ENCODE measurements at regions of chr14 and their contacts with region 1.

Region 1: GRCh38 chr14:68816262-68816942 is 23.5 kb upstream of the ZFP36L1 start:
- DNase-seq: peak; percentile 86 to 90 (median 88)
- H3K4me3 ChIP-seq: peak overlapping the region; percentile 13 to 62 (median 42)
- H3K4me3 Mint-ChIP-seq: peak overlapping the region; percentile 64 to 69
- H3K27ac ChIP-seq: peak overlapping the region; percentile 84 to 93
- H3K27ac Mint-ChIP-seq: peak overlapping the region; percentile 80 to 94 (median 84)
- H3K4me1 ChIP-seq: peaks cover 31 to 39% of the 10 kb centered on the region in 2 donors
- H3K4me1 Mint-ChIP-seq: peaks cover 37% of the 10 kb centered on the region
- H3K27me3 ChIP-seq: no peaks in the 10 kb centered on the region
- H3K27me3 Mint-ChIP-seq: peaks cover 3 to 5% (median 3%) of the 10 kb centered on the region in 3 donors
- CTCF ChIP-seq: peak; percentile 99

Region 2: GRCh38 chr14:67837011-67837624 is 979.3 kb before region 1 on chr14:
- intact Hi-C with region 1: loop called (anchors 5 kb)
- DNase-seq: peak; percentile 71 to 77 (median 75)
- H3K4me3 ChIP-seq: no peak overlapping the region
- H3K4me3 Mint-ChIP-seq: no peak overlapping the region
- H3K27ac ChIP-seq: no peak overlapping the region
- H3K27ac Mint-ChIP-seq: peak overlapping the region in 5 of 7 donors; percentile 14 to 66 (median 42)
- H3K4me1 ChIP-seq: peaks cover 0 to 9% of the 10 kb centered on the region in 2 donors
- H3K4me1 Mint-ChIP-seq: peaks cover 5% of the 10 kb centered on the region
- H3K27me3 ChIP-seq: no peaks in the 10 kb centered on the region
- H3K27me3 Mint-ChIP-seq: peaks cover 0 to 2% (median 0%) of the 10 kb centered on the region in 3 donors
- CTCF ChIP-seq: peak; percentile 73

Region 3: DNA sequence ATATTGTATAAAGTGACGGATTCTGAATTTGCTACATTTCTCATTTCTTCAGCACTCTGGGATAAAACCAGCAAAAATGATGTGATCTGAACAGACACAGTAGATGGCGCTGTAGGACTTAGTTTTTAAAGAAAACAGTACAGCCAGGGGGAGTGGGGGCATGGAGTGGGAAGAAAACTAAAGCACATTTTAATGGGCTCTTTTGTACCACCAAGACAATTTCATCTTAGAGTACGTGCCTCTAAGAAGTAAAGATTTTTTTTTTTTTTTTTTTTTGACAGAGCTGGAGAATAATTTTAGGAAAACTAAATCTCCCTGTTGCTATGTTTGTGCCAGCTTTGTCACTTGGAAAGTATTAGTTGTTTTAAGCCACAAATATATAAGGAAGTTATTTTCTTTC is 872.5 kb before region 1 on chr14:
- intact Hi-C with region 1: loop called (anchors 2 to 5 kb)
- DNase-seq: peak; percentile 60 to 76 (median 71)
- H3K4me3 ChIP-seq: no peak overlapping the region
- H3K4me3 Mint-ChIP-seq: no peak overlapping the region
- H3K27ac ChIP-seq: no peak overlapping the region
- H3K27ac Mint-ChIP-seq: no peak overlapping the region
- H3K4me1 ChIP-seq: peaks cover 6 to 8% of the 10 kb centered on the region in 2 donors
- H3K4me1 Mint-ChIP-seq: peaks cover 21% of the 10 kb centered on the region
- H3K27me3 ChIP-seq: no peaks in the 10 kb centered on the region
- H3K27me3 Mint-ChIP-seq: peaks cover 0 to 1% (median 0%) of the 10 kb centered on the region in 3 donors
- CTCF ChIP-seq: peak; percentile 83

Region 4: DNA sequence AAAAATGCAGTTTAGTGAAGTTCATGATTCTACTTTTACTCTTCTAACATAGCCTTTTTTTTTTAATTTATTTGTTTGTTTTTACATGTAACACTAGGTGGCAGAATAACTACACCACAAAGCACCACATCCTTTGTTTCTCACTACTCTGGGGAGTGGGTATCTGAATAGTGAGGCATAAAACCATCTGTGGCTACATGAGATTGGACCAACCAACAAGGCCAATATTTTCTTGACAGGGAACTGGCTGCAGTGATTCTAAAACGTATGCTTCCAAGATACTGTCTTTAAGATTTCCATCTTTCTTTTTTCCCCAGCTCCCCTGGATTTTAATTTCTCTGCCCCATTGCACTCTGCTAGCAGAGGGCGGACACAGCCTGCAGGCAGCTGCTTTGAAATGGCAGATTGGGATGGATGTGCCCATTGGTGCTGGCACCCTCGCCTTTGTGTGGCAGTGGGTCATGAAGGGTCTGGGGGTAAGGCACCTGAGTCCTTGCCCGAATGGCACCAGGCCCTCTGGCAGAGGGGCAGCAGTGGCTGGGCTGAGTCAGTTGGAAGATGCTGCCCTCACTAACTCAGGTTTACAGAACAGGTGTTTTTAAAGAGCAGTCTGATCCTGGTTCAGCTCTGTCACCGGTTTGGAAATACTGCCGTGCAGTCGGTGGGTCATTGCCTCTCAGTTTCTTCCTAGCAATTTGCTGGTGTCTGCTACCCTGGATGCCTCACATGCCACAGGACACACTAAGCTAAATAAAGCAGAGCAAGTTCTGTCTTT is 567.7 kb before region 1 on chr14:
- intact Hi-C with region 1: loop called (anchors 5 kb)
- DNase-seq: peak; percentile 33 to 54 (median 43)
- H3K4me3 ChIP-seq: peak overlapping the region in 1 of 3 experiments; percentile 23
- H3K4me3 Mint-ChIP-seq: peak overlapping the region in 1 of 2 donors; percentile 71
- H3K27ac ChIP-seq: peak overlapping the region in 1 of 2 donors; percentile 62
- H3K27ac Mint-ChIP-seq: peak overlapping the region; percentile 41 to 89 (median 87)
- H3K4me1 ChIP-seq: peaks cover 16 to 21% of the 10 kb centered on the region in 2 donors
- H3K4me1 Mint-ChIP-seq: peaks cover 22% of the 10 kb centered on the region
- H3K27me3 ChIP-seq: no peaks in the 10 kb centered on the region
- H3K27me3 Mint-ChIP-seq: peaks cover 0 to 1% (median 0%) of the 10 kb centered on the region in 3 donors
- CTCF ChIP-seq: peak; percentile 77

Region 5: GRCh38 chr14:68762953-68763764 is 53.2 kb before region 1 on chr14:
- intact Hi-C with region 1: no loop called
- DNase-seq: no peak
- H3K4me3 ChIP-seq: no peak overlapping the region
- H3K4me3 Mint-ChIP-seq: peak overlapping the region in 1 of 2 donors; percentile 12
- H3K27ac ChIP-seq: no peak overlapping the region
- H3K27ac Mint-ChIP-seq: no peak overlapping the region
- H3K4me1 ChIP-seq: peaks cover 17% of the 10 kb centered on the region in 2 donors
- H3K4me1 Mint-ChIP-seq: peaks cover 18% of the 10 kb centered on the region
- H3K27me3 ChIP-seq: peaks cover 7 to 45% of the 10 kb centered on the region in 2 donors
- H3K27me3 Mint-ChIP-seq: peaks cover 56 to 87% (median 72%) of the 10 kb centered on the region in 3 donors
- CTCF ChIP-seq: no peak

Region 6: GRCh38 chr14:68874746-68875155 is 58.3 kb after region 1 on chr14:
- intact Hi-C with region 1: no loop called
- DNase-seq: peak in 1 of 3 donors; percentile 6
- H3K4me3 ChIP-seq: peak overlapping the region in 2 of 3 experiments; percentile 20 to 55
- H3K4me3 Mint-ChIP-seq: peak overlapping the region; percentile 24 to 56
- H3K27ac ChIP-seq: no peak overlapping the region
- H3K27ac Mint-ChIP-seq: no peak overlapping the region
- H3K4me1 ChIP-seq: no peaks in the 10 kb centered on the region
- H3K4me1 Mint-ChIP-seq: no peaks in the 10 kb centered on the region
- H3K27me3 ChIP-seq: no peaks in the 10 kb centered on the region
- H3K27me3 Mint-ChIP-seq: peaks cover 0 to 1% (median 0%) of the 10 kb centered on the region in 3 donors
- CTCF ChIP-seq: no peak

Region 7: GRCh38 chr14:68939893-68940613 is 123.7 kb after region 1 on chr14:
- intact Hi-C with region 1: no loop called
- DNase-seq: no peak
- H3K4me3 ChIP-seq: no peak overlapping the region
- H3K4me3 Mint-ChIP-seq: no peak overlapping the region
- H3K27ac ChIP-seq: peak overlapping the region in 1 of 2 donors; percentile 47
- H3K27ac Mint-ChIP-seq: peak overlapping the region in 2 of 7 donors; percentile 14 to 76
- H3K4me1 ChIP-seq: peaks cover 46 to 65% of the 10 kb centered on the region in 2 donors
- H3K4me1 Mint-ChIP-seq: peaks cover 80% of the 10 kb centered on the region
- H3K27me3 ChIP-seq: no peaks in the 10 kb centered on the region
- H3K27me3 Mint-ChIP-seq: no peaks in the 10 kb centered on the region
- CTCF ChIP-seq: no peak